ENCODE measurements at regions of chr10 and their contacts with region 1.

Region 1: GRCh38 chr10:28676968-28677887 is at the start of gene BAMBI:
- DNase-seq: peak; percentile 91
- H3K4me3 Mint-ChIP-seq: peak within 1 kb of the TSS; percentile 91
- H3K27ac Mint-ChIP-seq: peak within 1 kb of the TSS; percentile 57
- H3K4me1 Mint-ChIP-seq: peaks cover 7% of the 10 kb centered on the region
- H3K27me3 Mint-ChIP-seq: peaks cover 12% of the 10 kb centered on the region
- CTCF ChIP-seq: peak; percentile 49
- total RNA-seq, gene BAMBI: 21.2 and 31.6 TPM in 2 replicates

Region 2: DNA sequence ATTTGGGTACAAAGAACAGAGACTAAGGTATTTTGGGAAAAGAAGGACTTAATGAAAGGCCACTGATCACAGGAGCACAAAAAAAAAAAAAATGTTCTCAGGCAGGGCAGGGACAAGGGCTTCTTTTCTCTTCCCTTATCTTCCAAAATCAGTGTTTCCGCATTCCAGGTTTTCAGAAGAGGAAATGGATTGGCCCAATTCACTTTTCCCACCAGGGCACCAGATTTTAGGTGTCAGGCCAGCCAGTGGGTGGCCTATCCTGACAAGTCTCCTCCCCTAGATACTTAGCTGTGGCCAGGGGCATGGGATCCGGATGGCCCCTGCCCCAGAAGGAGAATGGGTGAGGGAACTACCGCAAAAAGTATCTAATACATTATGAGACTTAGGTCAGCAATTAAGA is 233.2 kb before region 1 on chr10:
- CTCF ChIA-PET with region 1: no interaction called
- POLR2A ChIA-PET with region 1: no interaction called
- intact Hi-C with region 1: no loop called
- DNase-seq: no peak
- H3K4me3 Mint-ChIP-seq: no peak overlapping the region
- H3K27ac Mint-ChIP-seq: no peak overlapping the region
- H3K4me1 Mint-ChIP-seq: no peaks in the 10 kb centered on the region
- H3K27me3 Mint-ChIP-seq: no peaks in the 10 kb centered on the region
- CTCF ChIP-seq: no peak

Region 3: GRCh38 chr10:28892816-28893547 is 215.8 kb after region 1 on chr10:
- CTCF ChIA-PET with region 1: interaction called, 4 read pairs
- POLR2A ChIA-PET with region 1: no interaction called
- intact Hi-C with region 1: loop called (anchors 5 kb)
- DNase-seq: peak; percentile 73
- H3K4me3 Mint-ChIP-seq: no peak overlapping the region
- H3K27ac Mint-ChIP-seq: no peak overlapping the region
- H3K4me1 Mint-ChIP-seq: peaks cover 17% of the 10 kb centered on the region
- H3K27me3 Mint-ChIP-seq: no peaks in the 10 kb centered on the region
- CTCF ChIP-seq: no peak

Region 4: DNA sequence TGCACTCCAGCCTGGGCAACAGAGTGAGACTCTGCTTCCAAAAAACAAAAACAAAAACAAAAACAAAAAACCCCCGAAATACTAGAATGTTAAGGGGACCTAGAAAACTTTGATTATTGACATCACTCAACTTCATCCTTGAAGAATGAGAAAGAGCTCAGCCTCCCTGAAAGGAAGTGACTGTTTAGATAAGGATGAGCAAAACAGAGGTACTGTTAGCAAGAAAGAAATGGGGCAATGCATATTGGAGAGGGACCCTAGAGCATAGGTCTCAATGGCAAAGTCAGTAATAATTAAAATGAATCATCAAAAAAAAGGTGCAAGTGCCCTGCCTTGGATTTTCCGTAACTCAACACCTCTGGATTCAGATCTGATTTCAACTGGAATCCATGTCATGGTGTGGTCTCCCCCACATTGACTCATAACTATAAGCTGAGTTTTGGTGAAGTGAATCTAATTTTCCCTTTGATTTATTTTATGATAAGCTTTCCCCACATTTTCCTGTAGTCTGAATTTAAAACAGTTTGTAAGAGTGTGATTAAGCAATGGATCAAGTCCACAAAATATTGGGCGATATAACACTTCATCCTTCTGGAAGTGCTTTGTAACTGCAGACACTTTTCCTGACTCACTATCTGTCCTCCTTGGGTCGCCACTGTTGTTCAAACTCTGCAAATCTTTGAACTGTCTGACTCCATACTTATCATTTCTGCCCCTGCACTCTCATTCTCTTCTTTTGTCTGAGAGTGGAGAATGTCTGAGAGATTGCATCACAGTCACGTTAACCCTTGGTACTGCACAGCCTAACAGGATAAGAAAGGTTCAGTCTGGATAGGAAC is 386.8 kb after region 1 on chr10:
- CTCF ChIA-PET with region 1: no interaction called
- POLR2A ChIA-PET with region 1: interaction called, 4 read pairs
- intact Hi-C with region 1: loop called (anchors 5 kb)
- DNase-seq: peak; percentile 61
- H3K4me3 Mint-ChIP-seq: peak overlapping the region; percentile 53
- H3K27ac Mint-ChIP-seq: peak overlapping the region; percentile 44
- H3K4me1 Mint-ChIP-seq: peaks cover 29% of the 10 kb centered on the region
- H3K27me3 Mint-ChIP-seq: no peaks in the 10 kb centered on the region
- CTCF ChIP-seq: no peak

Region 5: DNA sequence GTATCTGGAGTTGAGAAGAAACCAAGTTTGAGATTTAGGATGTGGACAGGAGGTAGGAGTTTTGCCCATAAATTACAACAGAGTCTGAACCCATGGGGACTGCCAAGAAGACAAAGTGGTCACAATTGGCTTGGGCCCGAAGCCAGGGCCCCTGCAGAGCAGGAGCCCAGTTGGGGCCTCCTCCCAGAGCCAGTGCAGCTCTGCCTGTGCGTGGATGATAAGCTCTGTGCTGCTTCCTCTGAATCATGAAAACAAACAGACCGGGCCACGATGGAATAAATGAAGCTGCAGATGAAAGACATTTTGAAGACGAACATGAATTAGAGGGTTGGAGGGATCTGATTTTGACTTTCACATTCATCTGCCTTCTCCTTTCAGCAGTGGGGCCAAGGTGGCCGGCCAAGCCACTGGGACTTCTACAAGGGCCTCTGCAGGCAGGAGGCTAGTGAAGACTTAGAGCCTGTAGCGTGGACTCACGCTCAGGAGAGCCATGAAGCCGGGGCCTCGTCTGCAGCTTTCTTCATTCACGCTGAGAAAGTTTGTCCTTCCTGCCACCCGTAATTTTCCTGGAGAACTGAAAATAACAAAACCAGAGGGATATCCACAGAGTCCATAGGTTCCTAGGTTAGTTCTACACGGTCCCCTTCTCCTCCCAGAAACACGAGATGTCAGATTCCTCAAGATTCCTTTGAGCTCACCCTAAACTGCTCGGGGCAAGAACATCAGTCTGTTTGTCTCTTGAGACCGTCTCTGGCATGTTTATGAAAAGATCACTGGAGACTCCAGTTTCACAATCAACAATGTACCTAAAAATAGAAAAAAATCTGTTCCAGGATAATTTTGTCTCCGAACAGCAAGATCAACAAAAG is 455.0 kb after region 1 on chr10:
- CTCF ChIA-PET with region 1: interaction called, 10 read pairs
- POLR2A ChIA-PET with region 1: interaction called, 5 read pairs
- intact Hi-C with region 1: loop called (anchors 1 kb)
- DNase-seq: peak; percentile 44
- H3K4me3 Mint-ChIP-seq: no peak overlapping the region
- H3K27ac Mint-ChIP-seq: no peak overlapping the region
- H3K4me1 Mint-ChIP-seq: peaks cover 8% of the 10 kb centered on the region
- H3K27me3 Mint-ChIP-seq: peaks cover 5% of the 10 kb centered on the region
- CTCF ChIP-seq: no peak

Region 6: GRCh38 chr10:29239569-29240472 is 562.6 kb after region 1 on chr10:
- CTCF ChIA-PET with region 1: no interaction called
- POLR2A ChIA-PET with region 1: no interaction called
- intact Hi-C with region 1: loop called (anchors 5 kb)
- DNase-seq: peak; percentile 60
- H3K4me3 Mint-ChIP-seq: no peak overlapping the region
- H3K27ac Mint-ChIP-seq: no peak overlapping the region
- H3K4me1 Mint-ChIP-seq: no peaks in the 10 kb centered on the region
- H3K27me3 Mint-ChIP-seq: peaks cover 58% of the 10 kb centered on the region
- CTCF ChIP-seq: peak; percentile 32

Region 7: GRCh38 chr10:29304264-29305030 is 627.2 kb after region 1 on chr10:
- CTCF ChIA-PET with region 1: interaction called, 4 read pairs
- POLR2A ChIA-PET with region 1: interaction called, 4 read pairs
- intact Hi-C with region 1: loop called (anchors 1 kb)
- DNase-seq: peak; percentile 78
- H3K4me3 Mint-ChIP-seq: no peak overlapping the region
- H3K27ac Mint-ChIP-seq: no peak overlapping the region
- H3K4me1 Mint-ChIP-seq: no peaks in the 10 kb centered on the region
- H3K27me3 Mint-ChIP-seq: peaks cover 12% of the 10 kb centered on the region
- CTCF ChIP-seq: peak; percentile 83

Measured in MCF 10A (cell line).